Right ventricle myocardium inferior (tissue), 1 donor: ENCODE measurements at regions of chr14 and their contacts with region 1.

Region 1: GRCh38 chr14:105490572-105491366 is at the start of gene TEDC1:
- DNase-seq: peak; percentile 100
- ATAC-seq: peak; percentile 85
- total RNA-seq, gene TEDC1: 6.4 TPM

Region 2: GRCh38 chr14:105369653-105370040 is 121.1 kb before region 1 on chr14:
- intact Hi-C with region 1: loop called (anchors 1 kb)
- DNase-seq: no peak
- ATAC-seq: no peak

Region 3: GRCh38 chr14:105398044-105398725 is 92.6 kb before region 1 on chr14 and contains the start of gene TEX22:
- intact Hi-C with region 1: loop called (anchors 1 kb)
- DNase-seq: peak; percentile 95
- ATAC-seq: peak; percentile 94
- total RNA-seq, gene TEX22: 2.4 TPM

Region 4: DNA sequence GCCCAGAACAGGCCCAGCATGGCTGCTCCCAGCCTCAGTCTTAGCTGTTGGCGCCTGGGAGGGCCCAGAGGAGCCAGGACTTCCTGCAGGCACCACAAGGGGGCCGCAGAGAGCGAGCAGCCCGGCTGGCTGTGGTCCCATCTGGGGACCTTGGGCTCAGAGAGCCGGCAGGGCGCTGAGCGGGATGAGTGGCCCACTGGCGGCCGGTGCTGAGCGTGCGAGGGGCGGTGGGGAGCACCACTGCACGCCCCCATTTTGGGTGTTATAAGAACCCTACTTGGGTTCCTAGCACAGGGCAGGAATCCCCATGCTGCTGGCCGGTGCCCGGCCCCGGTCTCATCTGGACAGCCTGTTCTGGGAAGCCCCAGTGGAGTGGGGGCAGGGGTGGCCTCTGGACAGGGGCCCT is 42.1 kb before region 1 on chr14:
- intact Hi-C with region 1: loop called (anchors 1 kb)
- DNase-seq: peak; percentile 88
- ATAC-seq: peak; percentile 88

Region 5: DNA sequence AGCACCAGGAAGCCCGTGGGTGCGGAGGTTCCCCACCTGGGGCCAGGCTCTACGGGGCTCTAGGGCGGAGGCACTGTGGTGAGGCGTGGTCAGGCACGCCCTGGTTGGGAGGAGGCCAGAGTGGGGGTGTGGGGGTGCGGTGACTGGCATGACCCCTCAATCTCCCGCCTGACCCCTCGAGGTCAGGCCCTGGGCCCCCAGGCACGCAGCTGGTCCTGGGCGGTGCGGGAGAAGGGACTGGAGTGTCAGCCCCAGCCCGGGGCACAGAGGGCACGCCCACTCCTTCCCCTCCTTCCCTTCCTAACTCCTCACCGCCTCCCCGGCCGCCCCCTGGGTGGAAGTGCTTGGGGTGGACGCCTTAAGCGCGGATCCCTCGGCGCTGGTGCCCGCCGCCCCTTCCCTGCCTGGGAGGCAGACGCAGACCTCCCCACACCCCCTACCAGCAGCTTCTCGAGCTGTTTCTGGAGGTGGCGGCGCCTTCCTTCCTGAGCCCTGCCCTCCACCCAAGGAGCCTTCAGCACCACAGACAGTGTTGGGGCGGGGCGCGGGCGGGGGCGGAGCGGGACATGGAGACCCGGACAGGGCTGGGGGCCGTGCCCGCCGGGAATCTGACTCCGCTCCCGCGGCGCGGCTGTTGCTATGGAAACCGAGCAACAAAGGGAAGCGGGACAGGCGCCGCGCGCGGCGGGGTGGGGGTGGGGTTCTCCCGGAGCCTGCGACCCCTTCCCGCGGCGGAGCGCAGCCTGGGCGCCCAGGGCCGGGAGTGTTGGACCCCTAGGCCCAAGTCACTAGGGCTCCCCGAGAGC is 16.9 kb before region 1 on chr14:
- intact Hi-C with region 1: loop called (anchors 2 kb)
- DNase-seq: peak; percentile 97
- ATAC-seq: peak; percentile 40

Region 6: DNA sequence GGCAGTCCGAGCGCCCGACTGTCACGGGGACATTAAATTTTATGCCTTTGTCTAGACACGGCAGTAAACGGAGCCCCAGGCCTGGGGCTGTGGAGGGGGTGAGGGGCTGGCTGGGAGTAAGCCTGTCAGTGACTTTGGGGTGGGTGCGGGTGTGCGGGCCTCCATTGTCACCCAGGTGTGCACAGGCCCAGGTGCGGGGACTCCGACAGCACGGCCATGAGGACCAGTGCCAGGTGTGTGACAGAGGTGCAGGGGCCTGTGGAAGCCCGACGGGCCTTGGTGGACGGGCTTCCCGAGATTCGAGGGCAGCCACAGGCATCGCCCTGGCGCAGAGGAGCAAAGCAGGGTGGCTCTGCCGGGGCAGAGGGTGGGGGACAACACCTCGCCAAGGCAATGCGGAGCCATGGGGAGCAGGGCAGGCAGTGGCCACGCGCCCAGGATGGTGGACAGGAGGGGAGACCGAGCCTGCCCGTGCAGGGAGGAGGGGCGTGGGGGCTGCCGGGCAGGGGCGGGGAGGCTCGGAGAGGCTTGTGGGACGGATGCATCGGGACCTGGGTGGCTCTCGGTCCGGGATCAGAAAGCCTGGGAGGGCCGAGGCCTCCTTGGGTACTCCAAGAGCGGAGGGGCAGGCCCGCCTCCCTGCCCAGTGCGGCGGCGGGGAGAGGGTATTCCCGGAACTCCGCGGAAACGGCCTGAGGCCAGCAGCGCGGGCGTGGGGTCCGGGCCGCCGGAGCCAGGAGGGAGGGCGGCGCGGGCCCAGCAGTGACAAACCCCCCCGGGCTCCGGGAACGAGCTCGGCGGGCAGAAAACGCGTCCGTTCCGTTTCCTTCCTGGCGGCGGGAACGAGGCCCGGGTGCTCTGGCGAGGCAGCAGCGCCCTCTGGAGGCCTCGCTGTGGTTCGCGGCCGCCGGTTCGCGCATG is 37.2 kb after region 1 on chr14:
- intact Hi-C with region 1: loop called (anchors 2 kb)
- DNase-seq: peak; percentile 89
- ATAC-seq: peak; percentile 81